Psoas muscle (tissue), 8 donors: ENCODE measurements at regions of chr2 and their contacts with region 1.

Region 1: DNA sequence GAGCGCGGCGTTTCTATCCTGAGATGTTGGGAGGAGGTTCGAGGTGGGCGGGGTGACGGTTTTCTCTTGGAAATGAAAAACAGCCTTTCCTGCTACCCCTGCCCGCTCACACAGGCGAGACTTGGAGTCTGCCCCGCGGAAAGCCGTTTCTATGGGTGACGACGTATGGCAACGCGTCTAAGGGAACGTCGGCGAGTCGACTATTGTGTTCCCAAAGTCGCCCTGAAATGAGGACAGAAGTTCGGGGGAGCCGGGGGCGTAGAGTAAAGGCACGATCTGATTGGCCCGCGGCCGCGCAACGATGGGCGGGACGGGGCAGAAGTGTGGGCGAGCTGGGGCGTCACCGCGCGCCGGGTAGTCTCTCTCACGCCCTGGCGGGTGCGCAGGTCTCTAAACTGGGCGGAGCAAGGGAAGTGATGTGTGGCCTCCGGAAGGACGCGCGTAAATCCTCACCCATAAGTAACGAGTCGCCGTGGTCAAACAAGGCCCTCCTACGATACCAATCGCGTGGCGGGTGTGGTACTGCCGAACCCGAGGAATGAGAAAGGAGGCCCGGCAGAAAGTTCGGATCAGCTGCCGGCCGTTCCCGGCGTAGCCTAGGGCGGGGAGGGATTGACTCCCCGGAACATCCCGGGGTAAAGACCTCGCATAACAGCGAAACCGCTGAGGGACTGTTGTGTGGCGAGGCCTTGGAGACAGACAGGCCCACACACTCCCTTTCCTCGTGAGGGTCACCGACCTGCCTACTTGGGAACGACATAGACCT is 89.6 kb downstream of the FAM161A start:
- DNase-seq: peak; percentile 98 to 99
- ATAC-seq: peak; percentile 97 to 99 (median 98)
- H3K4me3 ChIP-seq: peak overlapping the region; percentile 85
- H3K27ac ChIP-seq: peak overlapping the region; percentile 100
- H3K4me1 ChIP-seq: peaks cover 10% of the 10 kb centered on the region
- H3K27me3 ChIP-seq: no peaks in the 10 kb centered on the region
- CTCF ChIP-seq: no peak

Region 2: DNA sequence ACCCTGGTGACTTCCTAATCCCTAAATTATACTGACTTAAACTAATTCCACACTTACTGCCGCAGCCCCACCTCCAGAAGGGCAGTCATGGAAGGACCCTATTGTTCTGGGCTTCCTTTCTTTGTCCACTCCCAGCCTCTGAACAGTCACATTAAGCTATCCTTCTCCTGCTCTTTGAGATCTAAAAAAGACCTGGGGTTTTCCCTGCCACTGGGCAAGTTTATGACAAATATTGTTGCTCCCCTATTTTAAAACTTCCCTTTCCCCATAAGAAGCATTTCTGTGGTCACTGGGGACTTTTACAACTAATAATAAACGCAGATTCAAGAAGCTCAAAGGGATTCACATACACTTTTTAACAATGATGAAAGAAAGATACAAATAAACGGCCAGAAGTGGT is 178.8 kb before region 1 on chr2:
- intact Hi-C with region 1: no loop called
- DNase-seq: no peak
- ATAC-seq: no peak
- H3K4me3 ChIP-seq: no peak overlapping the region
- H3K27ac ChIP-seq: no peak overlapping the region
- H3K4me1 ChIP-seq: no peaks in the 10 kb centered on the region
- H3K27me3 ChIP-seq: no peaks in the 10 kb centered on the region
- CTCF ChIP-seq: no peak

Region 3: GRCh38 chr2:61658841-61659780 is 105.1 kb before region 1 on chr2:
- intact Hi-C with region 1: loop called in 1 of 2 experiments (anchors 5 kb)
- DNase-seq: no peak
- ATAC-seq: peak; percentile 88 to 95 (median 91)
- H3K4me3 ChIP-seq: no peak overlapping the region
- H3K27ac ChIP-seq: peak overlapping the region; percentile 91
- H3K4me1 ChIP-seq: peaks cover 25% of the 10 kb centered on the region
- H3K27me3 ChIP-seq: no peaks in the 10 kb centered on the region
- CTCF ChIP-seq: peak; percentile 46

Region 4: DNA sequence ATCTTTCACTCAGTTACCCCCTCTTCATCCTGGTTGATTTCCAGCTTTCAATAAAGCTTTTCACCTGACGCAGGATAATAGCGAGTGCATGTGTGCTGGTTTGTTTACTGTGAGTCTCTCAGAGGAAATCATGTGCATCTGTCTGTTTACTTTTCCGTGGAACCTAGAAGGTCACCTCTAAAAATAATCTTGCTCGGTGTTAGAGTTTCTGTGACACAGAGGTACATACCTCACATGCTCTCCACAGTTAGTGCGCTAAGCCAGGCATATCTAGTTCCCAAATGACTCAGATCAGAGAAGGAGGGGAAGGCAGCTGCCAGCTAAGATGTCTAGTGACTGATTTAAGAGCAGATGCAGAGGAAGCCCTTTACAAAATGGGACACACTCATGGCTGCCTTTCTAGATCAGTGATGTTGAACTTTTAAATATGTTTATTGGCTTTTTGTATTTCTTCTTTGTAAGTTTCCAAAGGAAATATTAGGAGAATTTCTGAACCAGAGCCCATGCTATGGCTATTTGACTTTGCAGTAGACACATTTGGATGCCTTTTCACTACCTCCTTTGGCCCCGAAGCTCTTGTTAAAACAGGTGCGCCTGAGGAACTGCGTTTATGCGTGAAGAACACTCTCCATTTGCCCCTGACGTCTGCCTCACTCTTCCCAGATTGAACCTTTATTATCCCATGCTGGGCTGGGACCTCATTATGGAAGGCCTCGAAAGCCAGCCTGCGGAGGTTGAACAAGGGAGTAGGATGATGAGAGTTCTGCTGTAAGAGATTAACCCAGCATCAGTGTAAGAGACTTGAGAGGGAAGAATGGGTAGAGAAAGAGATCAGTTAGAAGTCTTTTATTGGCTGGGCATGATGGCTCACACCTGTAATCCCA is 56.0 kb before region 1 on chr2:
- intact Hi-C with region 1: loop called (anchors 2 to 10 kb)
- DNase-seq: no peak
- ATAC-seq: peak; percentile 88 to 90 (median 90)
- H3K4me3 ChIP-seq: no peak overlapping the region
- H3K27ac ChIP-seq: peak overlapping the region; percentile 95
- H3K4me1 ChIP-seq: peaks cover 25% of the 10 kb centered on the region
- H3K27me3 ChIP-seq: no peaks in the 10 kb centered on the region
- CTCF ChIP-seq: no peak

Region 5: GRCh38 chr2:61722318-61722717 is 41.9 kb before region 1 on chr2:
- intact Hi-C with region 1: loop called (anchors 5 kb)
- DNase-seq: no peak
- ATAC-seq: peak; percentile 25 to 72 (median 48)
- H3K4me3 ChIP-seq: peak overlapping the region; percentile 33
- H3K27ac ChIP-seq: peak overlapping the region; percentile 90
- H3K4me1 ChIP-seq: peaks cover 60% of the 10 kb centered on the region
- H3K27me3 ChIP-seq: no peaks in the 10 kb centered on the region
- CTCF ChIP-seq: no peak

Region 6: GRCh38 chr2:62149708-62150107 is 385.5 kb after region 1 on chr2:
- intact Hi-C with region 1: no loop called
- DNase-seq: no peak
- ATAC-seq: peak in 3 of 4 donors; percentile 47 to 69 (median 67)
- H3K4me3 ChIP-seq: no peak overlapping the region
- H3K27ac ChIP-seq: no peak overlapping the region
- H3K4me1 ChIP-seq: peaks cover 11% of the 10 kb centered on the region
- H3K27me3 ChIP-seq: no peaks in the 10 kb centered on the region
- CTCF ChIP-seq: no peak

Region 7: GRCh38 chr2:62415019-62415431 is 650.8 kb after region 1 on chr2:
- intact Hi-C with region 1: loop called in 1 of 2 experiments (anchors 5 kb)
- DNase-seq: no peak
- ATAC-seq: no peak
- H3K4me3 ChIP-seq: no peak overlapping the region
- H3K27ac ChIP-seq: no peak overlapping the region
- H3K4me1 ChIP-seq: peaks cover 4% of the 10 kb centered on the region
- H3K27me3 ChIP-seq: no peaks in the 10 kb centered on the region
- CTCF ChIP-seq: no peak